Astrocyte of the cerebellum (primary cell): ENCODE measurements at regions of chr12 and their contacts with region 1.

Region 1: GRCh38 chr12:121579981-121580868 is 598 bp downstream of the KDM2B start:
- DNase-seq: no peak
- H3K4me3 ChIP-seq: peak overlapping the region; percentile 38
- CTCF ChIP-seq: no peak

Region 2: GRCh38 chr12:121159467-121160307 is 420.5 kb before region 1 on chr12:
- in situ Hi-C with region 1: no loop called
- DNase-seq: no peak
- H3K4me3 ChIP-seq: no peak overlapping the region
- CTCF ChIP-seq: no peak

Region 3: GRCh38 chr12:121499929-121500793 is 80.1 kb before region 1 on chr12:
- in situ Hi-C with region 1: loop called (anchors 5 kb)
- DNase-seq: peak; percentile 35
- H3K4me3 ChIP-seq: peak overlapping the region; percentile 13
- CTCF ChIP-seq: peak; percentile 99